Activated T-helper 1 cell treated with anti-CD3 and anti-CD28 coated beads, Interleukin-12 subunit alpha, Interleukin-12 subunit beta, Interleukin-2, Interleukin-4 antibody, amounts not matched to agents 30 ng/mL and 10 ng/mL and 1 ng/mL, durations not matched to agents 14 hours and 24 hours and 36 hours (primary cell): ENCODE measurements at regions of chr3 and their contacts with region 1.

Region 1: GRCh38 chr3:112128843-112129727 is 4.0 kb downstream of the GCSAM start:
- DNase-seq: peak; percentile 55
- H3K4me3 Mint-ChIP-seq: peak overlapping the region; percentile 38
- H3K27ac Mint-ChIP-seq: peak overlapping the region; percentile 93
- H3K4me1 Mint-ChIP-seq: peaks cover 82% of the 10 kb centered on the region
- H3K27me3 Mint-ChIP-seq: no peaks in the 10 kb centered on the region

Region 2: DNA sequence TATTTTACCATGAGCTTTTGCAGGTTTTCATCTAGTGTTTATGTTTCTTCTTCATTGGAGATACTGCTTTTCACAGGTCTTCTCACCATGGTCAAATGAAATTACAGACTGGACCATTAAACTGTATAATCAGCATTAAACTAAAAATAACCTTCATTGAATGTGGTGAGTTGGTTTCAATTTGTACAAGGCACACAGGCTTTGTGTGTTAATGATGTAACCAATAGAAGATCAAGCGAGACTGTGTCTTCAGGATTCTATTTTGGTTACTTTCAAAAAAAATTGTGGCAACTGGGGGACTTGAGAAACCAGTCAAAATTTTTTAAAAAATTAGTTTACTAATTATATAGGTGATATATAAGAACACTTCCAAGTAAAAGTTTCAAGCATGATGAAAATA is 58.2 kb after region 1 on chr3:
- intact Hi-C with region 1: loop called (anchors 10 kb)
- DNase-seq: no peak
- H3K4me3 Mint-ChIP-seq: no peak overlapping the region
- H3K27ac Mint-ChIP-seq: no peak overlapping the region
- H3K4me1 Mint-ChIP-seq: no peaks in the 10 kb centered on the region
- H3K27me3 Mint-ChIP-seq: peaks cover 7% of the 10 kb centered on the region

Region 3: DNA sequence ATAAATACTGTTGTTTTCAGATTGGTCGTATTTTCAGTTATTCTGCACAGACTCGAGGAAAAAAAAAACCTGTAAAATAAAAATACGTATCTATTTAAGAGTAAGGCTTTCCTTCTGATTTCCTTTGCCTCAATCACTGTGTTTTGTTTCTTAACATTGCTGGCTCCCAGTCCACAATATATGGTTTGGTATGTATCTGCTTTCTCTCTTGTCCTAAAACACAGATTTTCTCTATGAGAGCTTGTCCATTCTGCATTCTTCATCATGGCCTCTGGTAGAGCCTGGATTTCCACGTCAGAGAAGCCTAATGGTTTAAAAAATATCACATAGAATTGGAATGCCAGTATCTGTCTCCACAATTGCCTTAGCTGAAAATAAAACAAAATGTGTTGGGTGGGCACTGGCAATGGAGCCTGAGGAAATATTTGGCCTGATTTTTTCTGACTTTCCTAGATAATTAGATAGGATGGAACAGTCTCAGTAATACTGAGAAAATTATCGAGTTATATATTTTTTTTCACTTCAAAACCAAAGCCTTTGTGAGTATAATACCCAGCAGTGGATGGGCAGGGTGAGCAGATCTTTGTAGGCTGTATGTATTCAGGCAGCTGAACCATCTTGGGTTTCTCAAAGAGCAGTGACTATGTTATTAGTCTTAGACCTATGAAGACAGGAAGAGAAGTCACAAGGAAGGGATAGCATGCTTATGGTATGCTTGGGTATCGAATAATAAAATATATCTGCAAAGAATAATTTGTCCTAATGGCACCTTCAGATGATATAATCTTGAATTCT is 205.8 kb after region 1 on chr3:
- intact Hi-C with region 1: no loop called
- DNase-seq: no peak
- H3K4me3 Mint-ChIP-seq: peak overlapping the region; percentile 97
- H3K27ac Mint-ChIP-seq: peak overlapping the region; percentile 70
- H3K4me1 Mint-ChIP-seq: peaks cover 56% of the 10 kb centered on the region
- H3K27me3 Mint-ChIP-seq: peaks cover 1% of the 10 kb centered on the region